Activated CD4-positive, alpha-beta T cell treated with anti-CD3 and anti-CD28 coated beads, Interleukin-2, amount 10 ng/mL, durations not matched to agents 24 days and 14 days (primary cell): ENCODE measurements at regions of chr9 and their contacts with region 1.

Region 1: GRCh38 chr9:71897577-71897976 is 13.4 kb downstream of the ABHD17B start:
- DNase-seq: peak; percentile 80
- H3K4me3 Mint-ChIP-seq: peak overlapping the region; percentile 49
- H3K27ac Mint-ChIP-seq: peak overlapping the region; percentile 42
- H3K4me1 Mint-ChIP-seq: peaks cover 72% of the 10 kb centered on the region
- H3K27me3 Mint-ChIP-seq: no peaks in the 10 kb centered on the region

Region 2: DNA sequence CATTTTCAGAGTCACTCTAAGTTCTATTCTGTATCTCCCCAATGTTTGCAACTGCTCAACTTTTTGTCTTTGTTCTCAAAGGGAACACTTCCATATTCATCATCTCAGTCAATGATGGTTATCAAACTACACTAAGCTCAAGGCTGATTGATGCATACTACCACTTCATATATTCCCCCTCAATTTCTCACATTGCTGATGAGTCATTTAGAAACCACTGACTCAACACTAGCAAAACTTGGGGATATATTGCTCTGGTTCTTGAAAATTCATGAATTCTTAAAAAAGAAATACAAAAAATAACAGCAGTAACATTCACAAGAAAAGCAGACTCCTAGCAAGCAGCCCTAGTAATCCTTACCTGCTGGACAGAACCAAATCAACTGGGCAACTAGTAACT is 38.8 kb before region 1 on chr9:
- intact Hi-C with region 1: loop called (anchors 2 kb)
- DNase-seq: peak; percentile 59
- H3K4me3 Mint-ChIP-seq: peak overlapping the region; percentile 8
- H3K27ac Mint-ChIP-seq: peak overlapping the region; percentile 38
- H3K4me1 Mint-ChIP-seq: peaks cover 19% of the 10 kb centered on the region
- H3K27me3 Mint-ChIP-seq: no peaks in the 10 kb centered on the region

Region 3: GRCh38 chr9:71886015-71886414 is 11.6 kb before region 1 on chr9:
- intact Hi-C with region 1: loop called (anchors 1 kb)
- DNase-seq: no peak
- H3K4me3 Mint-ChIP-seq: no peak overlapping the region
- H3K27ac Mint-ChIP-seq: peak overlapping the region; percentile 73
- H3K4me1 Mint-ChIP-seq: peaks cover 21% of the 10 kb centered on the region
- H3K27me3 Mint-ChIP-seq: no peaks in the 10 kb centered on the region